Activated CD8-positive, alpha-beta T cell treated with anti-CD3 and anti-CD28 coated beads for 36 hours (primary cell): ENCODE measurements at regions of chr5 and their contacts with region 1.

Region 1: DNA sequence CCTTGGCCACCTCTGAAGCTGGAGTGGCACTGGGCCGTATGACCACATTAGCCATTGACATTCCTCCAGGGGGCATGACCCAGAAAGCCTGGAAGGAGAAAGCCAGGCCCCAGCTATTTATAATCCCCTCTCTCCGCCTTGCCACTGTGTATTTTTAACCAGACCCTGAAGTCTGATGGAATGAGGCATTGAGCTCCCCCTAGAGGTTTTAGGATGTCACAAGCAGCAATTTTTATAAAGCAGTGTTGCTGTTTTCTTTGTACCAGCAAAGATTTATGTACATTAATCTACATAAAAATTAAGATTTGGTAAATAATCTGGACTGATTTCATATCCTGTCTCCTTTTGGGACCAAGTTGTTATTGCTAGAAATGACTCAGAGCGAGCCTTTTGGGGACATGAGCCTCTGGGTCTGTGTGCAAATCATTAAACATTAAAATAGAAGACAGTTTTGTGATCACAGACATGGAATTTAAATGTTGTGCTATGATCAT is 127.1 kb downstream of the TRIO start:
- DNase-seq: peak; percentile 6
- ATAC-seq: peak; percentile 47
- H3K4me3 Mint-ChIP-seq: no peak overlapping the region
- H3K27ac Mint-ChIP-seq: no peak overlapping the region
- H3K4me1 Mint-ChIP-seq: peaks cover 4% of the 10 kb centered on the region
- H3K27me3 Mint-ChIP-seq: peaks cover 12% of the 10 kb centered on the region
- CTCF ChIP-seq: peak; percentile 87

Region 2: DNA sequence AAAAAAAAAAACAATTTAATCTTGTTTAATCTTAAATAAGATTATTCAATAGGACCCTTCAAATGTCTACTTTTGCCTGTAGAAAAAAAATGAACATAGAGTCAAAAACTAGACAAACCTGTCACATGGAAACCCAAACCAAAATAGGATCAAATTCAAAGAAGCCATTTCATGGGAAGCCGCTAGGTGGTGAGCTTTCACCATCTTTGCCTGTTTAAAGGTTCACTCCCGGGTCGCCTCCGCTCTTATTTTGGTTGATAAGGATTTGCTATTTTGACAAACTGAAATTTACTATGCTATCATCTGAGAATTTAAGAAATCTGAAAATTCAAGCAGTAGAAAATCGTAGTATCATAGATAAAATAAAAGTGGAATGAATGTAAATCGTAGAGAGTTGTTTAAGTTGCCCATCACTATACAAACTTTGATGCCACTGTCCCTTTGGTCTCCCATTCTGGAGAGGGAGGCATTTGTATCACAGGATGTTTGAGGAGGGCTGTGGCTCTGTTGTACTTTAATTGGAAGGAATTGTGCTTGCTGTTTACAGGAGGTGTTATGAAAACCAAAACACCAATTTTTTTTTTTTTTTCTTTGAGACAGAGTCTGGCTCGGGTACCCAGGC is 282.3 kb before region 1 on chr5:
- CTCF ChIA-PET with region 1: interaction called, 12 read pairs
- POLR2A ChIA-PET with region 1: no interaction called
- intact Hi-C with region 1: loop called (anchors 2 kb)
- DNase-seq: peak; percentile 40
- ATAC-seq: no peak
- H3K4me3 Mint-ChIP-seq: no peak overlapping the region
- H3K27ac Mint-ChIP-seq: no peak overlapping the region
- H3K4me1 Mint-ChIP-seq: no peaks in the 10 kb centered on the region
- H3K27me3 Mint-ChIP-seq: peaks cover 2% of the 10 kb centered on the region
- CTCF ChIP-seq: peak; percentile 78

Region 3: GRCh38 chr5:14108170-14108996 is 161.9 kb before region 1 on chr5:
- CTCF ChIA-PET with region 1: interaction called, 16 read pairs
- POLR2A ChIA-PET with region 1: no interaction called
- intact Hi-C with region 1: no loop called
- DNase-seq: peak; percentile 45
- ATAC-seq: peak; percentile 80
- H3K4me3 Mint-ChIP-seq: no peak overlapping the region
- H3K27ac Mint-ChIP-seq: no peak overlapping the region
- H3K4me1 Mint-ChIP-seq: peaks cover 12% of the 10 kb centered on the region
- H3K27me3 Mint-ChIP-seq: peaks cover 8% of the 10 kb centered on the region
- CTCF ChIP-seq: peak; percentile 67

Region 4: GRCh38 chr5:14118527-14119320 is 151.5 kb before region 1 on chr5:
- CTCF ChIA-PET with region 1: no interaction called
- POLR2A ChIA-PET with region 1: no interaction called
- intact Hi-C with region 1: loop called (anchors 5 kb)
- DNase-seq: no peak
- ATAC-seq: no peak
- H3K4me3 Mint-ChIP-seq: no peak overlapping the region
- H3K27ac Mint-ChIP-seq: no peak overlapping the region
- H3K4me1 Mint-ChIP-seq: no peaks in the 10 kb centered on the region
- H3K27me3 Mint-ChIP-seq: no peaks in the 10 kb centered on the region
- CTCF ChIP-seq: no peak

Region 5: GRCh38 chr5:14131855-14132503 is 138.3 kb before region 1 on chr5:
- CTCF ChIA-PET with region 1: no interaction called
- POLR2A ChIA-PET with region 1: no interaction called
- intact Hi-C with region 1: no loop called
- DNase-seq: no peak
- ATAC-seq: no peak
- H3K4me3 Mint-ChIP-seq: no peak overlapping the region
- H3K27ac Mint-ChIP-seq: no peak overlapping the region
- H3K4me1 Mint-ChIP-seq: no peaks in the 10 kb centered on the region
- H3K27me3 Mint-ChIP-seq: peaks cover 12% of the 10 kb centered on the region
- CTCF ChIP-seq: no peak

Region 6: DNA sequence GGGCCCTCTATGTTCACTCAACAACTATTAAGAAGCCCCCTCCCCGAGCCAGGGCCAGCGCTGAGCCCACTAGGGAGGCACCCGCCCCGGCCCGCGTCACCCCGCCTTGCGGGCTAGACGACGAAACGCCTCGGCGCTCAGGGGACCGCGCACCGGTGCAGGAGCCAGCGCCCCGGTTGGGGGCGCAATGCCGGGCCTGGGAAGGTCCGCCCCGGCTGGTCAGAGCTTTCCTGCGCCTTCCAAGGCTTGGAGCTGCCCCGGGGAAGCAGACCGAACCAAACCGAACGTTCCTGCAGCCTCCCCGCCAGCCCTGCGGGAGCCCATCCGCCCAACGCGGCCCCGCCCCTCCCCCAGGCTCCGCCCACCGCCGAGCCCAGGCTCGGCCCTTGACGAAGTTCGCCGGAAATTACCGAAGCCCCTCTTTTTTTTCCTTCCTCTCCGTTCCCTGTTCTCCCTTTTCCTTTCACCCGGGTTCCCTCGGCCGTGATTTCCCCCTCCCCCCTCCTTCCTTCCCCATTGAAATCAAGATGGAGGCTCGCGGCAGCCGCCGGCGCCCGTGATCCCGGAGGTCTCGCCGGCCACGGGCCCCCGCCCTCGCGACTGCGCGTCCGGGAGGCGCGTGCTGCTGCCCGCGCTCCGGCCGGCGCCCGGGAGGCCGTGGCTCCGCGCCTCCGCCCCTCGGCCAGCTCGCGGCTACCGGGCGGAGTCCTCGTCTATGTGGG is 127.3 kb before region 1 on chr5 and contains the start of gene TRIO:
- CTCF ChIA-PET with region 1: interaction called, 10 read pairs
- POLR2A ChIA-PET with region 1: no interaction called
- intact Hi-C with region 1: no loop called
- DNase-seq: peak; percentile 82
- ATAC-seq: peak; percentile 84
- H3K4me3 Mint-ChIP-seq: peak within 1 kb of the TSS; percentile 77
- H3K27ac Mint-ChIP-seq: peak within 1 kb of the TSS; percentile 64
- H3K4me1 Mint-ChIP-seq: peaks cover 8% of the 10 kb centered on the region
- H3K27me3 Mint-ChIP-seq: peaks cover 47% of the 10 kb centered on the region
- CTCF ChIP-seq: peak; percentile 14
- total RNA-seq, gene TRIO: 11.4 to 11.5 TPM

Region 7: DNA sequence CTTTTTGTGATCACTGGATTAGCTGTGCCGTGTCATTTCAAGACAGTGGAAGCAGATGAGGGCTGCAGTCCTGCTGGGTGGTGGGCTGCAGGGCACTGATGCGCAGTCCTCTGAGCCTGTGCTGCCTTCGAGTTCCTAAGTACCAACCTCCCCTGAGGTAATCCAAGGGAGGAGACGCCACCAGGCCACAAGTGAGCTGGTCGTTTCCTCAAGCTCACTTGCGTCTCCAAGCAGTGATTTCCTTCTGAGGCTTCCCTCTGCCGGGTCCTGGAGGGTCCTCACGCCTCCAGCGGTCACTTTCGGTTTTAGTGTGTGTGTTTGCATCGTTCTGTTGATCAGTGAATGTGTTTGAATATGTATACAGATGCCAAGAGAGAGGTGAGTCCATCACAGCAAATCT is 11.4 kb before region 1 on chr5:
- CTCF ChIA-PET with region 1: interaction called, 25 read pairs
- POLR2A ChIA-PET with region 1: no interaction called
- intact Hi-C with region 1: no loop called
- DNase-seq: no peak
- ATAC-seq: no peak
- H3K4me3 Mint-ChIP-seq: no peak overlapping the region
- H3K27ac Mint-ChIP-seq: no peak overlapping the region
- H3K4me1 Mint-ChIP-seq: no peaks in the 10 kb centered on the region
- H3K27me3 Mint-ChIP-seq: peaks cover 11% of the 10 kb centered on the region
- CTCF ChIP-seq: no peak

Region 8: DNA sequence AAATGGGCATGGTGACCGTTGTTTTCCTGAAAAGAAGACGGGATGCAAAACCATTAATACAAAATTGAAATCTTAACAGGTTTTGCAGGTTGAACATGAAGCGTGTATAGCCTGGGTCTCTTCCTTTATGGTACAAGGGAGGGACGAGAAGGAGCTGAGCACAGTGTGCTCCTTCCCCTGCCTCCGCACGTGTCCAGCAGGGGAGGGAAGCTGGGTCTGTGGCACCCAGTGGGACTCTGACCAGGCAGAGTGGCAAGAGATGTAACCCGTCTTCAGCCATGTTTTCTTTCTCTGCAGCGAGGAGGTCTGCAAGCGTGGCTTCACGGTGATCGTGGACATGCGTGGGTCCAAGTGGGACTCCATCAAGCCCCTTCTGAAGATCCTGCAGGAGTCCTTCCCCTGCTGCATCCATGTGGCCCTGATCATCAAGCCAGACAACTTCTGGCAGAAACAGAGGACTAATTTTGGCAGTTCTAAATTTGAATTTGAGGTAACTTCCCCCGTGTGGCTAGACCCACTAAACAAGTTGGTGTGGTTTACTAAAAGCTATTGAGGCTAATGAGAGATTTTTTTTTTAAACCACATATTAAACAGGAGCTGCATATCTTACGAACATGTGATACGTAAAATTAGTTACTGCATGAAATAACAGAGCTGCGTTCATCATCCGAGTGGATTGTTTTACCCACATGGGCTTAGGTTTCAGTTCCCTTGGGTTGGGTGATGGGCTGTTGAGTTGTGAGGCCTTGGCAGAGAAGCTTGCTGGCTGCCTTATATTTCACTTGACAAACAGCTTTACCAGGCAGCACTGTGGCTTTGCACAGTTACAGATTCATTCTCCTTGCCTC is 16.5 kb after region 1 on chr5:
- CTCF ChIA-PET with region 1: interaction called, 11 read pairs
- POLR2A ChIA-PET with region 1: no interaction called
- intact Hi-C with region 1: no loop called
- DNase-seq: no peak
- ATAC-seq: no peak
- H3K4me3 Mint-ChIP-seq: no peak overlapping the region
- H3K27ac Mint-ChIP-seq: no peak overlapping the region
- H3K4me1 Mint-ChIP-seq: no peaks in the 10 kb centered on the region
- H3K27me3 Mint-ChIP-seq: no peaks in the 10 kb centered on the region
- CTCF ChIP-seq: no peak